ENCODE measurements at regions of chr9 and their contacts with region 1.

Region 1: DNA sequence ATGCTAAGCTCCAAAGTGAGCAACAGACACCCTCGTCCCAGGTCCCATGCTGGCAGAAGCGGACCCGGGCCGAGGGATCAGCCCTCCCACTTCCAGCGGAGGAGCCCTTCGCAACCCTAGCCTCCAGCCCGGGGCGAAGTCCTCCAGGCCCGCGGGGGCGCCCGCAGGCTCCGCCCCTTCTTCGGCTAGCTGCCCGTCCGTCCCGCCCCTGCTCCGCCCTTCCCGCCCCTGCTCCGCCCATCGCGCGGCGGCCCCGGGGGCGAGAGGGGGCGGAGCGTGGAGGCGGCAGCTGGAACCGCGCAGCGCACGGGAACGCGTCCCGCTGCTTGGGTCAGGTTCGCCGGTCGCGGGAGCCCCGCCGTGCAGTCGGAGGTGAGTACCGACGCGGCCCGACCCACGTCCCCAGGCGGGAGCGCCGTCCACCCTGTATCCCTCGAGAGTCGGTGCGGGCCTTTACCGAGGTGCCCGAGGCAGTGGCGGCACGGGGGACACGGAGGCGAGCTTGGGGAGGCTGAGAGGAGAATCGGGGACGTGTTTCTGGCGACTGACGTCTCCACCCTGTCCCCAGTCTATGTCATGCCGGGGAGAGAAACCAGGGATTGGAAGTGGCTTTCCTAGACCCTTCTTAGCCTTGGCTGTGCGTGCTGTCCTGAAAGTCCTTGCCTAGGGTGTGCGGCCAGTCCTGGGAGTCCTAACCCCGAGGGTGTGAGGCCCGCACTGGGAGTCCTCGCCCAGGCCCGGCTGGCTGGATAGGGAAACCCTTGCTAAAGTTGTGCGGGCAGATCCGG is at the start of gene ACO1:
- DNase-seq: peak; percentile 83
- H3K4me3 Mint-ChIP-seq: peak within 1 kb of the TSS; percentile 84
- H3K27ac Mint-ChIP-seq: peak within 1 kb of the TSS; percentile 3
- H3K4me1 Mint-ChIP-seq: peaks cover 8% of the 10 kb centered on the region
- H3K27me3 Mint-ChIP-seq: peaks cover 14% of the 10 kb centered on the region
- CTCF ChIP-seq: no peak
- total RNA-seq, gene ACO1: 28.6 and 31.4 TPM in 2 replicates

Region 2: GRCh38 chr9:32200896-32201295 is 183.7 kb before region 1 on chr9:
- CTCF ChIA-PET with region 1: no interaction called
- POLR2A ChIA-PET with region 1: no interaction called
- intact Hi-C with region 1: no loop called
- DNase-seq: no peak
- H3K4me3 Mint-ChIP-seq: no peak overlapping the region
- H3K27ac Mint-ChIP-seq: no peak overlapping the region
- H3K4me1 Mint-ChIP-seq: no peaks in the 10 kb centered on the region
- H3K27me3 Mint-ChIP-seq: peaks cover 53% of the 10 kb centered on the region
- CTCF ChIP-seq: no peak

Region 3: GRCh38 chr9:32395490-32396216 is 11.1 kb after region 1 on chr9:
- CTCF ChIA-PET with region 1: interaction called, 29 read pairs
- POLR2A ChIA-PET with region 1: interaction called, 21 read pairs
- intact Hi-C with region 1: no loop called
- DNase-seq: peak; percentile 92
- H3K4me3 Mint-ChIP-seq: peak overlapping the region; percentile 31
- H3K27ac Mint-ChIP-seq: peak overlapping the region; percentile 94
- H3K4me1 Mint-ChIP-seq: peaks cover 21% of the 10 kb centered on the region
- H3K27me3 Mint-ChIP-seq: no peaks in the 10 kb centered on the region
- CTCF ChIP-seq: no peak

Region 4: DNA sequence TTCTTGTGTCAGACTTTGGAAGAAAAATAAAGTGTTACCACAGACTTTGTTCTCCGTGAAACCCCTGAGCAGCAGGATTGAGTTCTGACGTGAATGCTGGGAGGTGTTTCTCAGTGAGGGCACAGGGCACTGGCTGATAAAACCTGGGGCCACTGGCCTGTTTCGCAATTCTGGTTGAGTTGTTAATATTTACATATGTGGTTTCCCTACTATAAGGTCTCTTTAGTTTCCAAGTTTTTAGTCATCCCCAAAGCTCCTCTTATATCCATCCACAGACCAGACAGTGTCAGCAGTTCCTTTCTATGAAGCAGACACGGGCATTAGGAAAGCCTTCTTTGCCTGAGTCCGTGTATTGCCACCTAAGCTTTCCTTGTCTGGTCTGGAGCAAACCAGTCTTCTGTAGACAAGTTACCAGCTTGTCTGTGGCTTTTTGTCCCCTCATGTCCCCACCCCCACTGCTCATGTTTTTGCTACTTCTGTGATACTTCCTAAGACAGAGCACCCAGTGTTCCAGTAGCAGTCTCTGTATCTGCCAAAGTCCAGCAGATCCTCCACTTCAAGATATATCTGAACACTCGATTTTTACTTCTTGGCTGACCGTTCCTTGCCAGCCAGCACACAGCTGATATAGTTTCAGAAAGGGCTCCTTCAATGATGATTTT is 41.9 kb after region 1 on chr9:
- CTCF ChIA-PET with region 1: interaction called, 45 read pairs
- POLR2A ChIA-PET with region 1: interaction called, 6 read pairs
- intact Hi-C with region 1: loop called (anchors 2 kb)
- DNase-seq: peak; percentile 88
- H3K4me3 Mint-ChIP-seq: no peak overlapping the region
- H3K27ac Mint-ChIP-seq: peak overlapping the region; percentile 79
- H3K4me1 Mint-ChIP-seq: no peaks in the 10 kb centered on the region
- H3K27me3 Mint-ChIP-seq: no peaks in the 10 kb centered on the region
- CTCF ChIP-seq: no peak

Region 5: GRCh38 chr9:32431940-32432555 is 47.5 kb after region 1 on chr9:
- CTCF ChIA-PET with region 1: interaction called, 45 read pairs
- POLR2A ChIA-PET with region 1: interaction called, 6 read pairs
- intact Hi-C with region 1: loop called (anchors 1 kb)
- DNase-seq: peak; percentile 51
- H3K4me3 Mint-ChIP-seq: no peak overlapping the region
- H3K27ac Mint-ChIP-seq: peak overlapping the region; percentile 46
- H3K4me1 Mint-ChIP-seq: no peaks in the 10 kb centered on the region
- H3K27me3 Mint-ChIP-seq: no peaks in the 10 kb centered on the region
- CTCF ChIP-seq: peak; percentile 47

Region 6: DNA sequence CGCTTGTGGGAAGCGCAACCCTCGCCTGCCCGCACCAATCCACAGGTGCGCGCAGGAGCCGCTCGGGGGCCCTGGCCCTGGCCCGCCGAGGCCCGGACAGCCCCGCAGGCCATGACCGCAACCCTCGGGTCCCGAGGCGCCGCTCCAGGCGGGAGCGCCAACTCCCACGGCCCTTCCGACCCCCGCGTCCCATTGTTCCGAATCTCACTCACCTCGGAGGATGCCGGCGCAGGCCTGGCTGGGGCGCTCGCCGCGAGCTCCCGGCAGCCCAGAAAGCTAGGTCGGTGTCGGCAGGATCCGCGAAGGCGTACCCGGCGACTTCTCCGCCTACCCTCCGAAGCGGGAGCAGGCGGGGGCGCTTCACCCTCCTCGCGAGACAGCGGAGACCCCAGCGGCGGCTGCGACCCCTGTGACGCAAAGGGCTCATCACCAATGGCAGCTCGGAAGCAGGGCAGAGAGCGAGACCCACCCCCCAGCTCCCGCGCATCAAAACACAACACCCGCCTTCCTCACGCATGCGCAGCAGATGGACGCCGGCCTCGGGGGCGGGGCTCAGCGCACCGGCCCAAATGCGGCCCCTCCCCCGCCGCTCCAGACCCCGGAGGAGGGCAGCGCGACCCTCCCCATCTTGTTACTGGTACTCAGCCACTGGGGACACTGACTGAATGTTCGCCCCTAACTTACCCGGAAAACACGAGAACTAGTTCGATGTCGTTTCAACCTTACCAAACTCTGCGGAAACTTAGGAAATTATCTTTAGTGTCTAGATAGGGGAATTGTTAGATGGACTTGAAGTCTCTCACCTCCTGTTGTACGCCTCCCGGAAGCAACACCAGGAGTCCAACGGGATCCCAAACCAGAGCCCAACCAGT is 166.2 kb after region 1 on chr9:
- CTCF ChIA-PET with region 1: interaction called, 16 read pairs
- POLR2A ChIA-PET with region 1: interaction called, 14 read pairs
- intact Hi-C with region 1: no loop called
- DNase-seq: peak; percentile 86
- H3K4me3 Mint-ChIP-seq: peak overlapping the region; percentile 98
- H3K27ac Mint-ChIP-seq: peak overlapping the region; percentile 94
- H3K4me1 Mint-ChIP-seq: peaks cover 13% of the 10 kb centered on the region
- H3K27me3 Mint-ChIP-seq: no peaks in the 10 kb centered on the region
- CTCF ChIP-seq: no peak

Region 7: GRCh38 chr9:32571969-32572899 is 187.7 kb after region 1 on chr9:
- CTCF ChIA-PET with region 1: interaction called, 601 read pairs
- POLR2A ChIA-PET with region 1: interaction called, 49 read pairs
- intact Hi-C with region 1: no loop called
- DNase-seq: peak; percentile 84
- H3K4me3 Mint-ChIP-seq: peak overlapping the region; percentile 93
- H3K27ac Mint-ChIP-seq: peak overlapping the region; percentile 90
- H3K4me1 Mint-ChIP-seq: peaks cover 13% of the 10 kb centered on the region
- H3K27me3 Mint-ChIP-seq: no peaks in the 10 kb centered on the region
- CTCF ChIP-seq: peak; percentile 64

Measured in MCF 10A (cell line).